ENCODE measurements at regions of chr1 and their contacts with region 1.

Region 1: GRCh38 chr1:168342572-168343280 is 62.0 kb downstream of the TBX19 start:
- DNase-seq: peak; percentile 43 to 88
- ATAC-seq: peak; percentile 98 to 99
- H3K4me3 ChIP-seq: peak overlapping the region; percentile 32
- H3K27ac ChIP-seq: peak overlapping the region; percentile 51 to 71
- H3K4me1 ChIP-seq: peaks cover 13% of the 10 kb centered on the region; the same call in 1 of the 3 replicates
- CTCF ChIP-seq: peak; percentile 84
- EP300 ChIP-seq: no peak
- POLR2A ChIP-seq: no peak
- RAD21 ChIP-seq: peak; percentile 88 to 92

Region 2: DNA sequence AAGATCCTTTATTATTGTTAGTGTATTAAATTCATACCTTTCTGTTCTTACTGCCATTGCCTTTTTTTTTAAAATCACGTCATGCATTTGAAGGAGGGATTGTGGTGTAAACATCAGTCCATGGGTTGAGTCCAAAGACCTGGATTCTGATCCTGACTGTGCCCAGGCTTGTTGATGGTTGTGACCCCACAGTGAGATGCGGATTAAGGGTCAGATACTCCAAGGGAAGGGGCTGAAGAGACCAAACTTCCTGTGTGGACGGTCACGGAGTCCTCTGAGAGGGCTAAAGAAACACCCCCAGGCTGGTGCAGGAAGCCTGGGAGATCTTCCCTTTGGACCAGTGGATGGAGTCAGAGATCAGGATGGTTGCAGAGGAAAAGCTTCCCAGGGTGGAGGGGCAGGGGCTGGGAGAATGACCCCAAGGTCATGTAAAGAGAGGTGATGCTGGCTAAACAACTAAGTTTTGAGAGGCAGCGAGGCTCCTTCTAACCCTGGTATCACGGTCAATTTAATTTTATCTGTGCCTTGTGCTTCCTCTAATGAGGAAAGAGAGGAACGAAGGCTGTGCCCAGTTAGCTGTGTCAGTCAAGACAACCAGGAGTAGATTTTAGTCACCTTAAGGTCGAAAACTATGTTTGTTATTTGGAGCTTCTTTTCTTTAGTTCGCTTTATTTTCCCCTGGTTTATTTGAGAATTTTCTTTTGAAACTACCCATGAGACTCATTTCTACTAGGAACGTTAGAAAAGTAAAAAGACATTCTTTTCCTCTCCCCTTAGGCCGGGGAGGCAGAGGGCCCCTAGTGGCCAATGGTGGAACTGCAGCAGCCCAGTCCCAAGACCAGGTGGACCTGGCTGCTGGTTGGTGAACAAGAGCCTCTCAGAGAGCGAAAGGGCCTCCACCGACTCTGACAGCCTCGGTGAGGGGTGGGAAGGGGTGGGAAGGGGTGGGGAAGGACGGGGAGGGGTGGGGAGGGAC is 197.3 kb before region 1 on chr1:
- CTCF ChIA-PET with region 1: no interaction called
- POLR2A ChIA-PET with region 1: no interaction called
- DNase-seq: peak; percentile 90 to 93
- ATAC-seq: peak; percentile 99 to 100
- H3K4me3 ChIP-seq: no peak overlapping the region
- H3K27ac ChIP-seq: peak overlapping the region in 1 of 2 experiments; percentile 67; a peak in 3 of 6 replicates
- H3K4me1 ChIP-seq: 0 out of 3 replicates have a peak, but pooled peaks cover 4% of the 10 kb centered on the region
- CTCF ChIP-seq: peak; percentile 70
- EP300 ChIP-seq: no peak
- POLR2A ChIP-seq: no peak
- RAD21 ChIP-seq: peak; percentile 46 to 63; a peak in 4 of 5 replicates

Region 3: GRCh38 chr1:168234846-168235547 is 107.7 kb before region 1 on chr1:
- CTCF ChIA-PET with region 1: interaction called, 17 read pairs
- POLR2A ChIA-PET with region 1: no interaction called
- DNase-seq: peak; percentile 65 to 84
- ATAC-seq: peak; percentile 87 to 94
- H3K4me3 ChIP-seq: no peak overlapping the region
- H3K27ac ChIP-seq: 0 out of 6 replicates have a peak overlapping the region, but pooled peaks of 1 of the 2 experiments have one; percentile 19
- H3K4me1 ChIP-seq: peaks cover 53% of the 10 kb centered on the region
- CTCF ChIP-seq: peak; percentile 54
- EP300 ChIP-seq: no peak
- POLR2A ChIP-seq: no peak
- RAD21 ChIP-seq: peak; percentile 55 to 68

Region 4: DNA sequence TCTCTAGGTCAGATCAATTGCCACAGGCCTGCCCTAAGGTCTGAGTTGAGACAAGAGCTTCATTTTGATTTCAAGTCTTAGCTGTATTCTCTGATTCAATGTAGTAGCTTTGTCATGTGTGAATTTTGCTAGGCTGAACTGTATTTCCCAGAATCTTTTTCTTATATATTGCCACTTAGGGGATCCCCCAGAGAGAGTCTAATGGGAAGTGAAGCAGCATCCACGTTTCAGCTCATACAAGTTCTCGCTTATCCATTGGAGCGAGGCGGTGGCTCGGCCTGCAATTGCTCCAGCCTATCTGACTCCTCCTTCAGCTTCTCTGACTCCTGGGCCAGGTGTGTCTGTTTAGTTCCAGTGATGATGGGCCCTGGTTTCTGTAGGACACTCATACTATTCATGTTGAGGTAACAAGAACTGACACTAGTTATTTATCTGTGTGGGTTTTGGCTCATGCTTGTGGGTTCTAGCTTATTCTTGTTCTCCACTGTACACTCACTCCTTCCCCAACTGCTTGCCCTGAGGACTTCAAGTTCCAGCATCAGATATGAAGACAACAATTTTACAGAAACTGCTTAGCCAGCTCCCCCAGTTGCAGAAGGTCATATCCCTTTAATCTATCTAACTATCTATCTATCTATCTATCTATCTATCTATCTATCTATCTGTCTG is 13.9 kb before region 1 on chr1:
- CTCF ChIA-PET with region 1: interaction called, 30 read pairs
- POLR2A ChIA-PET with region 1: no interaction called
- DNase-seq: no peak
- ATAC-seq: no peak
- H3K4me3 ChIP-seq: no peak overlapping the region
- H3K27ac ChIP-seq: no peak overlapping the region
- H3K4me1 ChIP-seq: no peaks in the 10 kb centered on the region
- CTCF ChIP-seq: no peak
- EP300 ChIP-seq: no peak
- POLR2A ChIP-seq: no peak
- RAD21 ChIP-seq: no peak

Region 5: GRCh38 chr1:168365719-168366479 is 23.2 kb after region 1 on chr1:
- CTCF ChIA-PET with region 1: interaction called, 18 read pairs
- POLR2A ChIA-PET with region 1: no interaction called
- DNase-seq: peak in 1 of 2 experiments; percentile 46
- ATAC-seq: peak; percentile 50 to 72; a peak in 4 of 6 replicates
- H3K4me3 ChIP-seq: no peak overlapping the region
- H3K27ac ChIP-seq: 0 out of 6 replicates have a peak overlapping the region, but pooled peaks of 1 of the 2 experiments have one; percentile 8
- H3K4me1 ChIP-seq: peaks cover 14% of the 10 kb centered on the region
- CTCF ChIP-seq: peak; percentile 28; the same call in 2 of the 3 replicates
- EP300 ChIP-seq: no peak
- POLR2A ChIP-seq: no peak
- RAD21 ChIP-seq: peak in 1 of 2 experiments; percentile 12; a peak in 1 of 5 replicates

Region 6: GRCh38 chr1:168386949-168387586 is 44.3 kb after region 1 on chr1:
- CTCF ChIA-PET with region 1: interaction called, 19 read pairs
- POLR2A ChIA-PET with region 1: no interaction called
- DNase-seq: peak; percentile 45 to 64
- ATAC-seq: peak; percentile 79 to 82
- H3K4me3 ChIP-seq: peak overlapping the region; percentile 34; the same call in 2 of the 3 replicates
- H3K27ac ChIP-seq: peak overlapping the region; percentile 13 to 23; a peak in 2 of 6 replicates
- H3K4me1 ChIP-seq: peaks cover 13% of the 10 kb centered on the region
- CTCF ChIP-seq: no peak
- EP300 ChIP-seq: no peak
- POLR2A ChIP-seq: no peak
- RAD21 ChIP-seq: no peak

Region 7: DNA sequence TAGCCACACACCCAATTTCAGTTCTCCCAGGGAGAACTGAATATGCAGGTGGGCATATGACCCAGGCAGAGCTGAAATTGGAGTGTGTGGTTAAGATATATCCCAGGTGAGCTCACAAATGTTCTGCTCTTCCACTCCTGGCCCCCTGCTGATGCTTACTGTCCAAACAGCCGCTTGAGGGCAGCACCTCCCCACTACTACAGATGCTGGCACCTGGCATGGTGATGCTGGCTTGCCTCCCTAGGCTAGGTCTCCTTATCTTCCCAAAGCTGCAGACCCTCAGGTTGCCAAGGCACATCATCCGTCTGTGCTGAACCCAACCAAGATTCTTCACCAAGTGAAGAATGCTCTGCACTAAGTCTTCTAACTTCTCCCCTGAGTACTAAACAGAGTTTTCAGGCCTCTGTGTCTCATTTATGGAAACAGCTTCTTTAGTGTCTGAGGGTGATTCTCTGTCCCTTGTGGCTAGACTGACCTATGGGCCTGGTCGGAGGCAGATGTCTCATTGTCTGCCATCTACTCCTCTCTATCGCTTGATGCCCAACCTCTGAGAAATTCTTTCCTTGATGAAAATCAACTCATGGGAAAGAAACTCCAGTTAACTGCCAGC is 260.9 kb after region 1 on chr1:
- CTCF ChIA-PET with region 1: interaction called, 19 read pairs
- POLR2A ChIA-PET with region 1: interaction called, 5 read pairs
- DNase-seq: peak; percentile 45 to 73
- ATAC-seq: peak; percentile 98 to 100
- H3K4me3 ChIP-seq: no peak overlapping the region
- H3K27ac ChIP-seq: peak overlapping the region; percentile 12 to 38; a peak in 2 of 6 replicates
- H3K4me1 ChIP-seq: 0 out of 3 replicates have a peak, but pooled peaks cover 3% of the 10 kb centered on the region
- CTCF ChIP-seq: peak; percentile 85
- EP300 ChIP-seq: no peak
- POLR2A ChIP-seq: no peak
- RAD21 ChIP-seq: peak; percentile 96 to 98

Region 8: DNA sequence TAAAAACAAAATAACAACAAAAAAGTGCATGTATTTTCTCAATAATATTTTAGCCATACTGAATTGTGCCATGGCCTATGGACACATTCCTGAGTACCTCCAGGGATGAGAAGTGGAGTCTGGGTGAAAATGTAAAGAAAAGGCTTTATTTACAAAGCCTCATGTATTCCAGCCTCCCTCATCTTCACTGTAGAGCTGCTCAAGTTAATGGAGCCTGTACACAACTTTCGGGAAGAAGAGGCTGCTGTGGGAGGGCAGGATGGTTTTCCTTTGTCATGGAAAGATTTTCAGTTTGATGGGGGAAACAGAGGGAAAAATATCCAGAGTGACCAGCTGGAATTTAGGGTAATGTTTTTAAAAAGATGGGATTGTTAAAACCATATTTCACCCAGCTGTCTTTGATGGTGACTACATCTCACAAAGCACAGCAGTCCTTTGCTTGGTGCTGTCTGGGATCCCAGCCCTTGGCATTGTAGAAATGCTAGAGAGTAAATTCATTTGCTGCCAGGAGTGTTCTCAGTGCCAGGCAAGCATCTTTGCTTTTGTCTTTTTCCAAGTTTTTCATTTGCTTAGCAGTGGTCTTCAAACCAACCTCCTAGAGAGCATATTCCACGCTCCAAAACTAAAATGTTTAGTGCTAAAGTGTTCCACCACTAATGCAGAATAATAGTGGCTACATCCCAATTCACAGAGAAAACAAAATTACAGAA is 331.4 kb after region 1 on chr1:
- CTCF ChIA-PET with region 1: no interaction called
- POLR2A ChIA-PET with region 1: no interaction called
- DNase-seq: no peak
- ATAC-seq: no peak
- H3K4me3 ChIP-seq: no peak overlapping the region
- H3K27ac ChIP-seq: no peak overlapping the region
- H3K4me1 ChIP-seq: no peaks in the 10 kb centered on the region
- CTCF ChIP-seq: no peak
- EP300 ChIP-seq: no peak
- POLR2A ChIP-seq: no peak
- RAD21 ChIP-seq: no peak

Measured in A549 (cell line).